Activated T-helper 2 cell treated with anti-CD3 and anti-CD28 coated beads, Interferon-gamma antibody, Interleukin-2, Interleukin-4, amounts not matched to agents 10 μg/mL and 5 μg/mL and 100 μg/mL, durations not matched to agents 14 hours and 24 hours and 36 hours (primary cell): ENCODE measurements at regions of chr19 and their contacts with region 1.

Region 1: DNA sequence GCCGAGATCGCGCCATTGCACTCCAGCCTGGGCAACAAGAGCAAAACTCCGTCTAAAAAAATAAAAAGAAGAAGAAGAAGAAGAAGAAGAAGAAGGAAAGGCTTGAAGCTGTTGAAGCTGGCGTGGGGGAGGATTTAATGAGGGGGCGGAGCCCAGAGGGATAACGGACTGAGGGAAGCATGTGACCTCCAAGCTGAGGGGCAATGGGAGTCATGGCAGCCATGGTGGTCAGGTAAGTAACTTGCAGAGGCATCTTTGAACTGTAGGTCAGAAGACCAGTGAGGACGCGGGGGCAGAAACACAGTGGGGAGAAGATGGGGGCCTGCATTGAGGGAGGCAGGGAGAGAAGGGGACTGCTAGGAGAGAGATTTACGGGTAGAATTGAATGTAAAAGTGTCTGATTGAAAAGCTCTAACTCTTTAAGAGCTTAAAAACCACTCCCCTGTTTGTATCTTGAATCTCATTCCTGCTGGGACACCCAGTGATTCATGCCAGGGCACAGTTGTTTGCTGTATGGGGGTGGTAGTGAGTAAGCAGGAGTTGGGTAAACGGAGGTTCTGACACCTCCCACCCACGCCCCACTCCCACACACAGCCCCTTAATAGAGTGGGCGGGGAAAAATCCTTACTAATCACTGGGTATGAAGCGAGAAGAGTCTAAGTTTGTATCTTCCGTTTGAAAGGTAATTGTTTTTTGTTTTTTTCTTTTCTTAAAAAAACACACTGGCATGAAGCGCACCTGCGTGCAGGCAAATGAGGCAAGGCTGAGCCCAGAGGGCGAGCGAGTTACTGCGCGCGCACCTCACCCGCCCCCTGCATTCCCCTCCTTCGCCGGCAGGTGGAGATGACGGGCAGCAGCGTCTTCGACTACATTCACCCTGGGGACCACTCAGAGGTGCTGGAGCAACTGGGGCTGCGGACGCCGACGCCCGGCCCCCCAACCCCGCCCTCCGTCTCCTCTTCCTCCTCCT is 13.0 kb downstream of the TMEM160 start:
- DNase-seq: peak; percentile 94
- H3K4me3 Mint-ChIP-seq: peak overlapping the region; percentile 83
- H3K27ac Mint-ChIP-seq: peak overlapping the region; percentile 87
- H3K4me1 Mint-ChIP-seq: peaks cover 21% of the 10 kb centered on the region
- H3K27me3 Mint-ChIP-seq: peaks cover 9% of the 10 kb centered on the region

Region 2: GRCh38 chr19:47002107-47002766 is 33.2 kb before region 1 on chr19:
- intact Hi-C with region 1: no loop called
- DNase-seq: no peak
- H3K4me3 Mint-ChIP-seq: no peak overlapping the region
- H3K27ac Mint-ChIP-seq: no peak overlapping the region
- H3K4me1 Mint-ChIP-seq: no peaks in the 10 kb centered on the region
- H3K27me3 Mint-ChIP-seq: peaks cover 24% of the 10 kb centered on the region

Region 3: GRCh38 chr19:47013041-47013517 is 22.3 kb before region 1 on chr19:
- intact Hi-C with region 1: loop called (anchors 2 kb)
- DNase-seq: peak; percentile 46
- H3K4me3 Mint-ChIP-seq: no peak overlapping the region
- H3K27ac Mint-ChIP-seq: no peak overlapping the region
- H3K4me1 Mint-ChIP-seq: peaks cover 9% of the 10 kb centered on the region
- H3K27me3 Mint-ChIP-seq: peaks cover 5% of the 10 kb centered on the region

Region 4: DNA sequence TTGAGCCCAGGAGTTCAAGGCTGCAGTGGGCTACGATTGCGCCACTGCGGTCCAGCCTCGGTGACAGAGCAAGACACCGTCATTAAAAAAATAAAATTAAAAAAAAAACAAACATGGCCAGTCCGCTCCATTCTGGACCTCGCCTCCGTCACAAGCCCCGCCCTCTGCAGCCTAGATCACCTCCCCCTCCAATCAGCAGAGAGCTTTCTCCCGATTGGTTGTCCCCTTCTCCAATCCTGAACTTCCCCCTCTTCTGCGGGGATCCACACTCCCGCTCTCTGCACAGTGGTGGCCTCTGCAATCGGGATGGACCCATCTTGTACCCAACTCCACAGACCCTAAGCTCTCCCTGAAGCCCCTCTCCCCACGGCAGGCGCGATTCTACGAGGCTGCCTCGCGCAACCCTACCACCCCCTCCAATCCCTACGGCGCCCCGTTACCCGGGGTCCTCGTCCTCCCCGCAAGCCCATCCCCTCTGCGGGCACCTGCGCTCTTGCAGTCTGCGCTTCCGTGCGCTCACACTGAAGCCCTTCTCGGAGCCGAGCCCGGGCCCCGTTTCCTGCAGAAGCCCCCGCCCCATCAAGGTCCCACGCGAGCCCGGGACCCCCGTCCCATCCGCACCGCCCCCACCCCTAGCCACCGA is 12.5 kb after region 1 on chr19:
- intact Hi-C with region 1: loop called (anchors 1 kb)
- DNase-seq: peak; percentile 77
- H3K4me3 Mint-ChIP-seq: peak overlapping the region; percentile 87
- H3K27ac Mint-ChIP-seq: peak overlapping the region; percentile 82
- H3K4me1 Mint-ChIP-seq: peaks cover 7% of the 10 kb centered on the region
- H3K27me3 Mint-ChIP-seq: peaks cover 3% of the 10 kb centered on the region

Region 5: DNA sequence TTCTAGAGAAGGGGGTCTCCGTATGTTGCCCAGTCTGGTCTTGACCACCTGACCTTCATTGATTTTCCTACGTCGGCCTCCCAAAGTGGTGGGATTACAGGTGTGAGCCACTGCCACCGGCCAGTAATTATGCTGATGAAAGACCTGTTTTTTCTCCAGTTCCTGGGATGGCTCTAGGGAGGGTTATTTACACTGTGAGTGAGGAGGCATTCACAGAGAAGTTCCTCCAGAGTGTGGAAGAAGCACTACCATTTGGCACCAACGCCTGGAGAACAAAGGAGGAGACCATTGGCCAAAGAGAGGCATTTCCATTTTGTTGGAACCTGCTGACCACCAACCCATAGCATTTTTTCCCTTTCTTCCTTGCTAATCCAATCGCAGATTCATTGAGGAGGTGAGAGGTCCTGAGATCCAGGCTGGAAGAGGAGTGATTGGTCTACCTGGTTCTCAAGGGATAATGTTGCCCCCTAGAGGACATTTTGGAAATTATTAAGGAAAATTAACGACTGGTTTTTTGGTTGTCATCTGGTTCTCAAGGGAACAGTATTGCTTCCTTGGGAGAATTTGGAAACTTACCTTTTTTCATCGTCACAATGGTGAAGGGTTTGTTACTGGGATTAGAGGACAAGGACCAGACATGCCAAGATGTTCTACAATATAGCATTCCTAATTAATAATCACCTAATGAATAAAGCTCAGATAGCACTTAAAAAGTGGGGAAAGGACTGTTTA is 89.7 kb after region 1 on chr19:
- intact Hi-C with region 1: loop called (anchors 5 kb)
- DNase-seq: no peak
- H3K4me3 Mint-ChIP-seq: no peak overlapping the region
- H3K27ac Mint-ChIP-seq: no peak overlapping the region
- H3K4me1 Mint-ChIP-seq: peaks cover 5% of the 10 kb centered on the region
- H3K27me3 Mint-ChIP-seq: no peaks in the 10 kb centered on the region